ENCODE measurements at regions of chr2 and their contacts with region 1.

Region 1: GRCh38 chr2:231394211-231395141 is 1.0 kb upstream of the B3GNT7 start:
- DNase-seq: peak; percentile 55
- ATAC-seq: peak; percentile 56
- H3K4me3 Mint-ChIP-seq: peak overlapping the region; percentile 97
- H3K27ac Mint-ChIP-seq: peak overlapping the region; percentile 100
- H3K4me1 Mint-ChIP-seq: peaks cover 67% of the 10 kb centered on the region
- H3K27me3 Mint-ChIP-seq: no peaks in the 10 kb centered on the region
- CTCF ChIP-seq: no peak

Region 2: DNA sequence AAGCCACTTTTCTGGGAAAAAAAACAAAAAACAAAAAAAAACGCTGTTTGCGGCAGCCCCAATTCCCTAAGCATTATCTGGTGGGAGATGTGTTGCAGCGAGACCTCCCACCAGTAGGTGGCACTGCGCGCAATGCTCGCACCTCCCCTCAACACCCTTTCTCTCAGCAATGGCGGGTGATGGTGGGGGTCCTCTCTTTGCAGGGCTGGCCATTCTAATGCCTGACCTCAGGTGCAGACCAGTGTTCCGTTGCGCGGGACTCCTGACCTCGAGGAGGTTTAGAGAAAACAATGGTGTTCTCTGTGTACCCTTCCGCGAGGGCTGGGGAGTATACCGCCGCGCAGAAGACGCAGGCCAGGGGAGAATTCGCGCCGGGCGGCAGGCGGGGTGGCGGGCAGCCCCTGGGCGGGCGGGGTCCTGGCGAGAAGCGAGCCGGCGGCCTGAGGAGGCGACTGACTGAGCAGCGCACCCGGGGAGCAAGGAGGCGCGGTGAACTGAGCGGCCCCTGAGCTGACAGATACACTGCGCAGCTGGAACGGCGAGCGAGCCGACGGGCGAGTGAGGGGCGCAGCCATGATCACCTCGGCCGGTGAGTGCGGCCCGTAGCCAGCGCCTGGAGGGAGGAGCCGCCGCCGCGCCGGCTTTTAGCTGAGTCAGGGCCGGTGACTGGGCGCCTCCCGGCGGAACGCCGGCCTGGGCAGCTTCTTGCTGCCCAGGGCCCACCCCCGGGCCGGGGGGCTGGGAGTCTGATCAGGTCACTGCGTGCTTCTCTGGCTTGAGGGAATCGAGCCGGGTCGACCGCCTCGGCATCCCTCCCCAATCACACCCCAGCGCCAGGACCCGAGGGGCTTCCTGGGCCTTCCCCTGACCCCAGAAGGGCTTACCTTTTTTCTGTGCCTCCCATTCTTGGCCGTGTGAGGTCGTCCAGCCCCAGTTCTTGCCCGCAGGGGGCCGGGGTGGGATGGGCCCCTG is 337.7 kb before region 1 on chr2 and contains the start of gene PSMD1:
- CTCF ChIA-PET with region 1: no interaction called
- POLR2A ChIA-PET with region 1: no interaction called
- intact Hi-C with region 1: loop called (anchors 5 kb)
- DNase-seq: peak; percentile 90
- ATAC-seq: peak; percentile 85
- H3K4me3 Mint-ChIP-seq: peak within 1 kb of the TSS; percentile 98
- H3K27ac Mint-ChIP-seq: peak within 1 kb of the TSS; percentile 100
- H3K4me1 Mint-ChIP-seq: peaks cover 43% of the 10 kb centered on the region
- H3K27me3 Mint-ChIP-seq: peaks cover 3% of the 10 kb centered on the region
- CTCF ChIP-seq: peak; percentile 65
- total RNA-seq, gene PSMD1: 99.9 and 105 TPM in 2 replicates

Region 3: DNA sequence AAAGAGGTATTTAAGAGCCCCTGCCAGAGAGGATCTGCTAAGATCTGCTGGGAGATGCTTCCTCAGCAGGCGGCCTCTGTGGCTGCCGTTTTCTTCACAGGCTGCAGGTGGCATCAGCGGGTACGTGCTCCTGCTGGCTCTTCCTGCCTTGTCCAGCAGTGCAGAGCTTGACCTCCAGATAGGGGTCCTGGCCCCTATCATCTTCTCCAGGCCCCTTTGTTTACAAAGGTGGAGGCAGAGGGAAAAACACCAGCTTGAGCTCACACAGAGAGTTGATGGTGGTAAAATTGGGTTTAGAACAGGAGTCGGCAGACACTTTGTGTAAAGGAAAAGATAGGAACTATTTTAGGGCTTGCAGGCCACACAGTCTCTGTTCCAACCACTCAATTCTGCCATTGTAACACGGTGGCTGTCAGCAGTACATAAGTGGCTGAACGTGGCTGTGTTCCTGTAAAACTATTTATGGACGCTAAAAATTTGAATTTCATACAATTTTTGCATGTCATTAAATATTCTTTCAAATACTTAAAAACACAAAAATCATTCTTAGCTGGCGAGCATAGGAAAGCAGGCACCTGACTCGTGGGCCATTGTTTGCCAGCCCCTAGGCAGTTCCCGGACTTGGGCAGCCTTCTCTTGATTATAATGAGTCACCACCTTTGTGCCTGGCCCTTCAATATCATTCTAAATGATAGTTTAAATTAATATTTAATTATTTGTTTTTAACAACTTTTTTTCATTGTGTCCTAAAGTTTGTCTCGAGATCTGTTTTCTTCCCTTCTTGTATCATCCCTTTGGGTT is 97.2 kb before region 1 on chr2:
- CTCF ChIA-PET with region 1: interaction called, 10 read pairs
- POLR2A ChIA-PET with region 1: interaction called, 20 read pairs
- intact Hi-C with region 1: loop called (anchors 1 kb)
- DNase-seq: peak; percentile 40
- ATAC-seq: peak; percentile 70
- H3K4me3 Mint-ChIP-seq: no peak overlapping the region
- H3K27ac Mint-ChIP-seq: peak overlapping the region; percentile 47
- H3K4me1 Mint-ChIP-seq: peaks cover 57% of the 10 kb centered on the region
- H3K27me3 Mint-ChIP-seq: no peaks in the 10 kb centered on the region
- CTCF ChIP-seq: no peak

Region 4: DNA sequence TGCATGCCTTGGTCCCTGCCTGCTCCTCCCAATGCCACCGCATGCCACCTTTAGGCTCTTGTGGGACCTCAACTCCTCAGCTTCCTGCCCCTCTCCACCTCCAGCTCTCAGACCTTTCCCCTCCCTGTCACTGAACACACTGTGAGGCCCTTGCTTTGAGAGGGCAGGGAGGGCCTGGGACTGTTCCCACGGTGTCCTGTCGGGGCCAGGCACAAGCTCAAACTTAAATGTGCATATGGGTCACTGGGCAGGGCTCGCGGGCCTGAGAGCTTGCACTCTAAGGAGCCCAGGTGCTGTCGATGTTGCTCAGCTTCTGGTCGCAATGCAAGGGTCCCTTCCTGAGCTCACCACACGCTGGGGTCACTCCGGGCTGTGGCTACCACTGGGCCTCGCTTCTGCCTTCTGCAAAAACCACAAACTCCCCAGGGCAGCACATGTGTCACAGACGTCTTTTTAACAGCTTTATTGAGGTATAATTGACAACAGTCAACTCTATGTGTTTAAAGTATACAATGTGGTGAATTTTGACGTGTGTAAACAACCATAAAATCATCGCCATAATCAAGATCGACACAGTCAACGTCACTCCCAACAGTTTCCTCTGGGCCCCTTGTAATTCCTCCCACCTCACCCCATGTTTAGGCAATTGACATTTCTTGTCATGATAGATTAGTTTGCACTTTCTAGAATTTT is 10.9 kb before region 1 on chr2:
- CTCF ChIA-PET with region 1: no interaction called
- POLR2A ChIA-PET with region 1: interaction called, 12 read pairs
- intact Hi-C with region 1: no loop called
- DNase-seq: no peak
- ATAC-seq: no peak
- H3K4me3 Mint-ChIP-seq: no peak overlapping the region
- H3K27ac Mint-ChIP-seq: no peak overlapping the region
- H3K4me1 Mint-ChIP-seq: peaks cover 5% of the 10 kb centered on the region
- H3K27me3 Mint-ChIP-seq: no peaks in the 10 kb centered on the region
- CTCF ChIP-seq: no peak

Region 5: DNA sequence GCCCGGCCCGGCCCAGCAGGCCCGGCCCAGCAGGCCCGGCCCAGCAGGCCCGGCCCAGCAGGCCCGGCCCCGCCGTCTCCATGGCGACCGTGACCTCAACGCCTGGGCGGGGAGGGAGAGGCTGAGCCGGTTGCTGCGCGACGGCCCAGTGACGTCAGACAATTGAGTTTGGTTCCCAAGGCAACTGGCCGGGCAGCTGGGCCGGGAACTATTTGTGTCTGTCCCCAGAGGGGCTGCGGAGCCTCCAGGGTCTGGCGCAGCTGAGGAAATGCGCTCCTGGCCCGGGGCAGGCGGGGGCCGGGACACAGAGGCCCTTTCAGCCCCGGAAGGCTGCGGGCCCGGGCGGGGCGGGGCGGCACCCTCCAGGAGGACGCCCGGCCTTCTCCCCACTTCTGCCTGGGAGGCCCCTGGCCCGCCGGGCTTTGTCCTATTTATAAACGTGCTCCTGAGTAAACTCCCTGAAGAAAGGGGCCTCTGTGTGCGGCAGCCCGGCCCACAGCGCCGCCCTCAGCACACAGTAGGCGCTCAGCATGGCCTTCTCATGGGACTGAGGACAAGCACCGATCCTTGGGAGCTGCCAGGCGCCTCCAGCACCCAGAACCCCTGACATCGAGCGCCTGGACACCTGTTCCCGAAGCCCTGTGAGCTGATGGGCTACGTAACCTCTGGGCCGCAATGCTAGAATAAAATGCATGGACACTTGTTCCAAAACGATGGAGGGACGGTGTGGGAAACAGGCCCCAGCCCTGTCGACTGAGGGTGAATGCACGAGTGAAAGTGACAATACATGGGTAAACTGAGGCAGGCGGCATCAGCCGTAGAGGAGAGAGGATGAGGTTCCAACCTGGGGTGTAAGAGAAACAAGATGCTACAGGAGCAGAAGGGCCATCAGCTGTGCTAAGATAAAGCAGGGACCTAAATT is 210.5 kb after region 1 on chr2:
- CTCF ChIA-PET with region 1: no interaction called
- POLR2A ChIA-PET with region 1: no interaction called
- intact Hi-C with region 1: loop called (anchors 2 kb)
- DNase-seq: peak; percentile 99
- ATAC-seq: peak; percentile 88
- H3K4me3 Mint-ChIP-seq: peak overlapping the region; percentile 72
- H3K27ac Mint-ChIP-seq: peak overlapping the region; percentile 87
- H3K4me1 Mint-ChIP-seq: peaks cover 31% of the 10 kb centered on the region
- H3K27me3 Mint-ChIP-seq: no peaks in the 10 kb centered on the region
- CTCF ChIP-seq: no peak